BJ (cell line): ENCODE measurements at regions of chr14 and their contacts with region 1.

Region 1: GRCh38 chr14:103910262-103910935 is 17.9 kb upstream of the TDRD9 start:
- DNase-seq: peak; percentile 23
- H3K4me3 ChIP-seq: no peak overlapping the region; the same call in 1 of the 2 replicates
- H3K27me3 ChIP-seq: no peaks in the 10 kb centered on the region
- CTCF ChIP-seq: peak; percentile 84

Region 2: DNA sequence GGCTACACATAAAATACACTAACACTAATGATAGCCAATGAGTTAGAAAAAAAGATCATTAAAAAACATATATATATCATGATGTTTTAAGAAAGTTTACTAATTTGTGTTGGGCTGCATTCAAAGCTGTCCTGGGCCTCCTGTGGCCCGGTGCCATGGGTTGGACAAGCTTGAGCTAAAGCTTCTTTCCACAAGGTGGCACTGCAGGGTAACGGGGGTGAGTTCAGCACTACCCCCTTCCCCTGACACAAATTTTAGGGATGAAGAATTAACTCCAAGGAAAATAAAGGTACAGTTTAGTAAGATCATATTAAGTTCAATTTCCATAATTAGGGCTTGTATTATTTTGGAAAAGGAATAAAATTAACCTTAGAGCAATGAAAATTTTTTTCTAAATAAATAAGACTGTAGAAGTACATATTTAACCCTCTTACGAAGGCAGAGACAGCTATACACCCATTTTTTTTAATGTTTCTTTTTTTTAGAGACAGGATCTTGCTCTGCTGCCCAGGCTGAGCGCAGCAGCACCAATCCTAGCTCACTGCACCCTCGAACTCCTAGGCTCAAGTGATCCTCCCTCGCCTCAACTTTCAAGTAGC is 101.9 kb before region 1 on chr14:
- CTCF ChIA-PET with region 1: interaction called, 35 read pairs
- POLR2A ChIA-PET with region 1: no interaction called
- DNase-seq: no peak
- H3K4me3 ChIP-seq: no peak overlapping the region
- H3K27me3 ChIP-seq: no peaks in the 10 kb centered on the region
- CTCF ChIP-seq: peak; percentile 88

Region 3: GRCh38 chr14:103828315-103828967 is 82.0 kb before region 1 on chr14:
- CTCF ChIA-PET with region 1: interaction called, 3 read pairs
- POLR2A ChIA-PET with region 1: interaction called, 12 read pairs
- DNase-seq: no peak
- H3K4me3 ChIP-seq: no peak overlapping the region
- H3K27me3 ChIP-seq: no peaks in the 10 kb centered on the region
- CTCF ChIP-seq: no peak

Region 4: DNA sequence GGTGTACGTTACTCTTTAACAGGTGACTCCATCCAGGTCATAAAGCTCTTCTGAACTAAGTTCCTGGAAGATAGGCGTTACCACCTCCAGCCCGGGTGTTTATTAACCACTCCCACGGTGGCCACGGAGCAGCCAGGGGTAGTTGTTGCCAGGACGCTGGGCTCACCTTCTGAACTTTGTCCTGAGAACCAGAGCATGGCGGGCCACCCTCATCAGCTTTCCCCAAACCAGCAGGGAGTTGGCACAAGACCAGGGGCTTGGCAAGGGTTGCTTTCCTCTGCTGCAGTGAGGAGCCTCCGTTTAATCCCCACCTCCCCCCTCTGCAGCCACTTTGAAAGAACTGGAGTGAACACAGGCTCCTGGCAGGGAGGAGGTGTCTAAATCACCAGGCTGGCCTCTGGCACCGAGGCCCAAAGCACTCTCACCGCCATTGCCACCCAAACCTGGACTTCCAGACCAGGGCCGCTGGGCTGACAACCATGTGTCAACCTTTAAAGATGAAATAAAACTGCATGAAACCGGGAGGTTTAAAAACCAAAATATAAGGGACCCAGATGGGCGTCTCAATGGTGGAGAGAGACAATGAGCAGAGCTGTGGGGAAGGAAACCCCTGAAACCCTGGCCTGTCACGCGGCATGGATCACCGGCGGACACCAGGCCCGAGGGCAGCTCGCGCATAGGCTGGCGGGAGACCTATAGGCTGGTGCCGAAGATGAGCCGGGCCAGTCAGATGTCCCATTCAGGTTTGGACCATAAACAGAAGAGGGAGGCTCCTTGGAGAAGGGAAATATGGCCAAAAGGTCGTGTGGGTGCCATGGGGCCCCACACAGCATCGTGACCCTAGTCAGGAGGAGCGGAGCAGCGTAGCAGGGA is 13.1 kb before region 1 on chr14:
- CTCF ChIA-PET with region 1: interaction called, 36 read pairs
- POLR2A ChIA-PET with region 1: no interaction called
- DNase-seq: no peak
- H3K4me3 ChIP-seq: no peak overlapping the region
- H3K27me3 ChIP-seq: no peaks in the 10 kb centered on the region
- CTCF ChIP-seq: no peak

Region 5: DNA sequence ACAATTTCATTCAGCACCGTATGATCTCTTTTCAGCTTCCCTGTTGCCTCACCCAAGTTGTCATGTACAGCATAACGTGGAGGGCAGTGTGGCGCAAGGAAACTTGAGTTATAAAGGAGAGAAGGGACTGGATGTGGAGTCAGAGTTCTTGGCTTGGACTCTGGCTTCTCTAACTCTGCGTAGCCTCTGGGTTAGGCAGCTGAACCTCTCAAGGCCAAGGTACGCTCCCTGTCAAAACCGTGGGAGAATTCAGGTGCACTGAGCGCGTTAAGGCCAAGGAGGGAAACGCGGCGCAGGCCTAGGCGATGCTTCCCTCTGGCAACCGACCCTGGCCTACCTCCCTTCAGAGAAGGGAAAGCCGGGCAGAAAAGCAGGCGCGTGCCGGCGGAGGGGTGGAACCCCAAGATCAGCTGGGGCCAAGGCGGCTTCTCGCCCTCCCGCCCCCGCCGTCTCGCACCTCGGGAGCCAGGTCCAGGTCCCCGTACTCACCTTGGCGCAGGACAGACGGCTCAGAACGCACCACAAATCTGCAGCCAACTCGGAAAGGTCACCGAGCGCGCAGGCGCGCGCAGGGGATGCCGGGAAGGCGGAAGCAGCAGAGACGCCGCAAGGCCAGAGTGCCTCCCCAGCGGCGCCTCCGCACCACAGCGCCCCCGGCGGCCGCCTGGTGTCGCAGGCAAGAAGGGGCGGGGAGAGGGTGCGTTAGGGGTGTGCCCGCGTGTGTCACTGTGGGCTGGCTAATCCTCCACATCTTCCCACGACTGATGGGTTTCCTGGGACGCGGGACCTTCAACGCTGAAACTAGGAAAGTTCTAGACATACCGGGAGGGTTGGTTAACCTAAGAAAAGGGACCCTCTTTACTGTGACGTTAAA is 10.8 kb after region 1 on chr14:
- CTCF ChIA-PET with region 1: interaction called, 26 read pairs
- POLR2A ChIA-PET with region 1: no interaction called
- DNase-seq: peak; percentile 51
- H3K4me3 ChIP-seq: peak overlapping the region; percentile 88
- H3K27me3 ChIP-seq: peaks cover 1% of the 10 kb centered on the region; the same call in 1 of the 2 replicates
- CTCF ChIP-seq: peak; percentile 98